Ovary (tissue), 10 donors: ENCODE measurements at regions of chr6 and their contacts with region 1.

Region 1: GRCh38 chr6:144510859-144511258 is 225.7 kb downstream of the UTRN start:
- DNase-seq: no peak
- H3K4me3 ChIP-seq: no peak overlapping the region
- H3K27ac ChIP-seq: no peak overlapping the region
- H3K4me1 ChIP-seq: no peaks in the 10 kb centered on the region
- H3K27me3 ChIP-seq: no peaks in the 10 kb centered on the region
- CTCF ChIP-seq: no peak
- EP300 ChIP-seq: no peak
- POLR2A ChIP-seq: no peak

Region 2: DNA sequence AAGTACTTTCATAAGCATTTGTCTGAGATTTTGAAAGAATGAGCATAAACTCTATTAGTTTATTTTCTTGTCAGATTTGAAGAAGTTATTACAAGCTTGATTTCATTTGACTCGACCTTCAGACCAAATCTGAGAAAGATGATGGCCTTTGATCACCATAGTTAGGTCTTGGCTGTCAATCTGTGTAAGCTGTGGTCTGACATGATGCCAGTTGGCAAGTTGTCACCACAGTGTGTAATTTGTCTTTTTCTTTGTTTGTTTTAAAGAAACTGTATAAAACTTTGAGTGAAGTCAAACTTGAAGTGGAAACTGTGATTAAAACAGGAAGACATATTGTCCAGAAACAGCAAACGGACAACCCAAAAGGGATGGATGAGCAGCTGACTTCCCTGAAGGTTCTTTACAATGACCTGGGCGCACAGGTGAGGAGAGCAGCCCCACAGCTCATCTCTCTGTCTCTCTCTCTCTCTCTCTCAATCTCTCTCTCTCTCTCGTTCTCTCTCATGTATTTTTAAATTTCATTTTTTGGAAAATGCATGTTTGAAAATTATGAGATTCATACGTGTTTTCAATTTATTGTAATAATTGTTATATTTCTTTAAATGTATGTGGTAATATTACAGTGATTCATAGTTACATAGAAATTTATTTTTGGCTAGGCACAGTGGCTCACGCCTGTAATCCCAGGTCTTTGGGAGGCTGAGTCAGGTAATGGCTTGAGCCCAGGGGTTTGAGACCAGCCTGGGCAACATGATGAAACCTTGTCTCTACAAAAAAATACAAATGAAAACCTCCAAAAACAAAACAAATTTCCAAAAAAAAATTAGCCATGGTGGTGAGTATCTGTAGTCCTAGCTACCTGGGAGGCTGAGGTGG is 17.6 kb before region 1 on chr6:
- intact Hi-C with region 1: loop called in 1 of 4 experiments (anchors 2 kb)
- DNase-seq: no peak
- H3K4me3 ChIP-seq: no peak overlapping the region
- H3K27ac ChIP-seq: no peak overlapping the region
- H3K4me1 ChIP-seq: no peaks in the 10 kb centered on the region
- H3K27me3 ChIP-seq: no peaks in the 10 kb centered on the region
- CTCF ChIP-seq: no peak
- EP300 ChIP-seq: no peak
- POLR2A ChIP-seq: no peak

Region 3: DNA sequence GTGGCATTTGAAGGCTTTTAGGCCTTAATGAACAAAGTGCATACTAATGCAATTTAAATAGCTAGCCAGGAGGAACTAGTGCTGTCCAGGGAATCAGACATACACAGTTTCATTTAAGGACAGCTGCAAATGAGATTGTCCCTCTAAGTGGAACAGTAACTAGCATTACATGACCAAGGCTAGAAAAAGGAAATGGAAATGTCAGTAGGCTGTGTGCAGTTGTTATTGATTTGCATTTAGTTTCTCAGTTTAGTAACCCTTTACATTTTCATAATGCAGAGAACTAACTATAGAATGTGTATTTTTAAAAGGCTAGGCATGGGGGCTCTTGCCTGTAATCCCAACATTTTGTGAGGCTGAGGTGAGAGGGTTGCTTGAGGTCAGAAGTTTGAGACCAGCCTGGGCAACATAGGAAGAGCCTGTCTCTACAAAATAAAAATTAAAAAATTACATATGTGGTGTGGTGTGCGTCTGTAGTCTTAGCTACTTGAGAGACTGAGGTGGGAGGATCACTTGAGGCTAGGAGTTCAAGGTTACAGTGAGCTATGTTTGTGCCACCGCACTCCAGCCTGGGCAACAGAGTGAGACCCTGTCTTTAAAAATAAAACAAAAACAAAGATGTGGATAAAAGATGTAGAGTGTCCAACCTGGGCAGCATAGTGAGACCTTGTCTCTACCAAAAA is 242.3 kb after region 1 on chr6:
- intact Hi-C with region 1: no loop called
- DNase-seq: no peak
- H3K4me3 ChIP-seq: no peak overlapping the region
- H3K27ac ChIP-seq: no peak overlapping the region
- H3K4me1 ChIP-seq: no peaks in the 10 kb centered on the region
- H3K27me3 ChIP-seq: no peaks in the 10 kb centered on the region
- CTCF ChIP-seq: no peak
- EP300 ChIP-seq: no peak
- POLR2A ChIP-seq: no peak

Region 4: DNA sequence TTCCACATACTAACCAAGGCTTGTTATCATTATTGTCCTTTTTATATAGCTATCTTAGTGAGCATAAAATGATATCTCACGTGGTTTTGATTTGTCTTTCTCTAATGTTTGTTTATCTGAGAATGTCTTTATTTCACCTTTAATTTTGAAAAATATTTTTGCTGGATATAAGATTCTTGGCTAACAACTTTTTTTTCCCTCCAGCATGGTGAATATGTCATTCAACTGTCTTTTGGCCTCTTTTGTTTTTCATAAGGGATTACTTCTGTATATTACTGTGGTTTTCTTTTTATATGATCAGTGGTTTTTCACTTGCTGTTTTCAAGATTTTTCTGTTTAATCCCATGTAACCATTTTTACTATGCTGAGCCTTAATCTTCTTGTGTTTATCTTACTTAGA is 1659.0 kb after region 1 on chr6:
- intact Hi-C with region 1: no loop called
- DNase-seq: no peak
- H3K4me3 ChIP-seq: no peak overlapping the region
- H3K27ac ChIP-seq: no peak overlapping the region
- H3K4me1 ChIP-seq: no peaks in the 10 kb centered on the region
- H3K27me3 ChIP-seq: no peaks in the 10 kb centered on the region
- CTCF ChIP-seq: no peak
- EP300 ChIP-seq: no peak
- POLR2A ChIP-seq: no peak